MCF 10A (cell line): ENCODE measurements at regions of chr11 and their contacts with region 1.

Region 1: GRCh38 chr11:101456812-101457211 is 127.0 kb downstream of the TRPC6 start:
- DNase-seq: no peak
- H3K4me3 Mint-ChIP-seq: no peak overlapping the region
- H3K27ac Mint-ChIP-seq: no peak overlapping the region
- H3K4me1 Mint-ChIP-seq: peaks cover 7% of the 10 kb centered on the region
- H3K27me3 Mint-ChIP-seq: no peaks in the 10 kb centered on the region
- CTCF ChIP-seq: peak; percentile 34

Region 2: GRCh38 chr11:101305496-101305895 is 151.3 kb before region 1 on chr11:
- CTCF ChIA-PET with region 1: no interaction called
- POLR2A ChIA-PET with region 1: no interaction called
- intact Hi-C with region 1: no loop called
- DNase-seq: no peak
- H3K4me3 Mint-ChIP-seq: no peak overlapping the region
- H3K27ac Mint-ChIP-seq: no peak overlapping the region
- H3K4me1 Mint-ChIP-seq: no peaks in the 10 kb centered on the region
- H3K27me3 Mint-ChIP-seq: no peaks in the 10 kb centered on the region
- CTCF ChIP-seq: no peak

Region 3: DNA sequence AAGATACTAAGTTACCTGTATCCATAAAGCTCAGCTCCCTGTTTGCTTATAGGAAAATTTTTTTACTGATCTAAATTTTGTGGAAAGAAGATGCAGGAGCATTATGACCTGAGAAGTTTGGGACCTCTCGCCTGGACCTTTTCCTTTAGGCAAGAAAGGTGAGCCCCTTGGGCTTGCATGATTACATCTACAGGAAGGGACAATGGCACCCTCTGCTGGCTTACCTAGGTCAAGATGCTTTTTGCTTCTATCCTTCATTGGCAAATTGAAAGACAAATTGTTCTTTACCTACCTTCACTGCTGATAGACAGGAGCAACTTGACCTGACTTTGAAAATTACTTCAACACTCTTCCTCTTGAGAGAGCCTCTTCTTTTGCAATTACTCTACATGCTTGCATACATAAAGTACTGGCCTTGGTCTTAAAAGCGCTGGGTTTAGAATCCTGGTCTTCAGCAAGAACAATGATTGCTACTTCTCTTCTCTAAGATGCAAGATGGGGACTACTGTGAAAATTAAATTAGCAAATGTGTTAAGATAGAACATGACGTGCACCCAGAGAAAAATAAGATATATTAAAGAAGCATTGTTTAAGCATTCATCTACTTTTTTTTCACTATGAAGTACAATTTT is 20.2 kb before region 1 on chr11:
- CTCF ChIA-PET with region 1: interaction called, 12 read pairs
- POLR2A ChIA-PET with region 1: no interaction called
- intact Hi-C with region 1: no loop called
- DNase-seq: peak; percentile 68
- H3K4me3 Mint-ChIP-seq: no peak overlapping the region
- H3K27ac Mint-ChIP-seq: no peak overlapping the region
- H3K4me1 Mint-ChIP-seq: peaks cover 15% of the 10 kb centered on the region
- H3K27me3 Mint-ChIP-seq: no peaks in the 10 kb centered on the region
- CTCF ChIP-seq: peak; percentile 77

Region 4: GRCh38 chr11:101470881-101471520 is 14.2 kb after region 1 on chr11:
- CTCF ChIA-PET with region 1: interaction called, 15 read pairs
- POLR2A ChIA-PET with region 1: no interaction called
- intact Hi-C with region 1: no loop called
- DNase-seq: peak; percentile 9
- H3K4me3 Mint-ChIP-seq: no peak overlapping the region
- H3K27ac Mint-ChIP-seq: no peak overlapping the region
- H3K4me1 Mint-ChIP-seq: peaks cover 6% of the 10 kb centered on the region
- H3K27me3 Mint-ChIP-seq: no peaks in the 10 kb centered on the region
- CTCF ChIP-seq: no peak

Region 5: GRCh38 chr11:101567071-101567470 is 110.3 kb after region 1 on chr11:
- CTCF ChIA-PET with region 1: no interaction called
- POLR2A ChIA-PET with region 1: no interaction called
- intact Hi-C with region 1: no loop called
- DNase-seq: no peak
- H3K4me3 Mint-ChIP-seq: no peak overlapping the region
- H3K27ac Mint-ChIP-seq: no peak overlapping the region
- H3K4me1 Mint-ChIP-seq: no peaks in the 10 kb centered on the region
- H3K27me3 Mint-ChIP-seq: no peaks in the 10 kb centered on the region
- CTCF ChIP-seq: no peak

Region 6: DNA sequence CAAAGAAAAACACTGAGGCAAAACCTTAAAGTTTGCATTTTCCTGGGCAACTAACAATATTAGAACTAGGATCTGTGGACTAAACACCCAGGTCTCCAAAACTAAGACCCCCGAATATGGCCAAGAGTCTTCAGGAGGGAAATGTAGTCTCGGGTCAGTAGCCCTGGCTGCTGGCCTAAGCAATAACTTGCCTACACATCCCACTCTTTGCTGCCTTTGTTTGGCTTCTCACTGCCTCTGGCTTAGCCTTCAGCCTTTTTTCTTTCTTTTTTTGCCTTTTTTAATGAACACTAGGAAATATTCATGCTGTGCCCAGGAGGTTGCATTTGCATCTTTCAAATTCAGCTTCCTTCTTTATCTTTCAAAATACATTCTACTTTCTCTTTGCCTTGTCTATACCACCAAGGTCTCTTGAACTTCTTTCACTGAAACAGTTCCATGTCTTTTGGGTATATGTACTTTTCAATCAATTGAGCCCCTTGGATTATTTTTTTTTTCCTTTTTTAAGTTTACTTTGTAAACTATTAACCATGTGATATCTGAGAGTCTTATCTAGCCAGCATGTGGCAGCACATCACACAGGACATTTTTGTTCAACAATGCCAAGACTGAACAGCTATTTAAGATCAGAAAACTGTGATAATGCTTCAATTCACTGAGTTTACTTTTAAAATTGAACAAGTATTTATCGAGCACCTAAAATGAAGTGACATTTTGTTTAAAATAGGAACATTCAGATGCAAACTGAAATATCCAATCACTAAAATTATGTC is 291.9 kb after region 1 on chr11:
- CTCF ChIA-PET with region 1: interaction called, 10 read pairs
- POLR2A ChIA-PET with region 1: no interaction called
- intact Hi-C with region 1: no loop called
- DNase-seq: no peak
- H3K4me3 Mint-ChIP-seq: no peak overlapping the region
- H3K27ac Mint-ChIP-seq: peak overlapping the region; percentile 77
- H3K4me1 Mint-ChIP-seq: peaks cover 13% of the 10 kb centered on the region
- H3K27me3 Mint-ChIP-seq: no peaks in the 10 kb centered on the region
- CTCF ChIP-seq: no peak

Region 7: GRCh38 chr11:102007567-102008437 is 551.0 kb after region 1 on chr11:
- CTCF ChIA-PET with region 1: interaction called, 51 read pairs
- POLR2A ChIA-PET with region 1: interaction called, 5 read pairs
- intact Hi-C with region 1: loop called (anchors 5 kb)
- DNase-seq: peak; percentile 70
- H3K4me3 Mint-ChIP-seq: no peak overlapping the region
- H3K27ac Mint-ChIP-seq: peak overlapping the region; percentile 90
- H3K4me1 Mint-ChIP-seq: peaks cover 31% of the 10 kb centered on the region
- H3K27me3 Mint-ChIP-seq: no peaks in the 10 kb centered on the region
- CTCF ChIP-seq: peak; percentile 44

Region 8: DNA sequence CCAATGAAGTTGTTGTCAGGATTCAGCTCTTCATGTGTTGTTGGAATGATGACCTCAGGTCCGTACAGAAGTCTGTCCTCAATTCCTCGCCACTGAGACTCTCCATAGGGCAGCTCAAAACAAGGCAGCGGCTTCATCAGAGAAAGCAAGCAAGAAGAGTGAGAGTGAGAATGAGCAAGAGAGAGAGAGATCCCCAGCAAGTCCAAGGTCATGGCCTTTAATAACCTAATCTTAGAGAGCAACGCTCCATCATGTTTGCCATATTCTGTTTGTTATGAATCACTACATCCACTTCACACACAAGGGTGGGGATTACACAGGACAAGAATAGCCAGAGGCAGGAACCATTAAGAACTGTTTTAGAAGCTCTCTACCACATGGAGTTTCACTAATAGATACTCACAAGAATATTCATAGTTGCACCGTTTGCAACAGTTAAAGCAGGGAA is 1097.0 kb after region 1 on chr11:
- CTCF ChIA-PET with region 1: no interaction called
- POLR2A ChIA-PET with region 1: no interaction called
- intact Hi-C with region 1: no loop called
- DNase-seq: peak; percentile 46
- H3K4me3 Mint-ChIP-seq: no peak overlapping the region
- H3K27ac Mint-ChIP-seq: peak overlapping the region; percentile 37
- H3K4me1 Mint-ChIP-seq: peaks cover 32% of the 10 kb centered on the region
- H3K27me3 Mint-ChIP-seq: no peaks in the 10 kb centered on the region
- CTCF ChIP-seq: no peak